Activated T-helper 1 cell treated with anti-CD3 and anti-CD28 coated beads, Interleukin-12 subunit alpha, Interleukin-12 subunit beta, Interleukin-2, Interleukin-4 antibody, amounts not matched to agents 30 ng/mL and 10 ng/mL and 1 ng/mL, durations not matched to agents 14 hours and 24 hours and 36 hours (primary cell): ENCODE measurements at regions of chr7 and their contacts with region 1.

Region 1: DNA sequence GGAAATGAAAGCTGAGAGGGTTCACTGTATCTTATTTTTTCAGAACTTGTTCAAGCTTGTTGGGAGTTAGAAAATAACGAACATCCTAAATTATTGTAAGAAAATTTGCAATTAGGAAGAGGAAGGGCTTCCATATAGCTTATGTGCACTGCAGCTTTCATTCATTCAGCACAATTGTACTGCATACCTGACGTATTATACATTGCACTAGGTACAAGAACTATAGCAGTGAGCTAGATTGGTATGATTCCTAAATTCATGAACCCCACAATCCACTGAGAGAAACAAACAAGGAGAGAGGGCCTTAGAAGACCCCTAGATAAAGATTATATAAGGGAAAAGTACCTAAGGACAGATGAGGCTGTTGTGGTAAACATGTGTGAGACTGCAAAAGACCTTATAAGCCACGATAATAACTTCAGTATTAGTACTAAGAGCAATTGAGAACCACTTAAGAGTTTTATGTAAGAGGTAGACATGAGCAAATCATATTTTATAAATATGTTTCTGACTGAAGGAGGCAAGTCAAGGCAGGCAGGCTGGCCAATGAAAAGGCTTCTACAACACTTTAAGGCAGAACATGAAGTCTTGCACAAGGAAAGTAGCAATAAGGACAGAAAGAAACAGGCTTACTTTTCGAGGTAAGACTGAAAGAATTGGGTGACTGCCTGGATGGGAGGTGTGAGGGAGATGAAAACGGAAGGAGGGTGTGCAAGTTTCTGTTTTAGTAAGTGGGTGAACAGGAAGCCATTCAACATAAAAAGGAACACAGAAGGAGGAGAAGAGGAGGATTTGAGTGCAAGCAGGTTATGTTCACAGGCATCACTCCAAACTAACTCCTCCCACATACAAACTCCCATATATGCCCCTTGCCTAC is 77.9 kb upstream of the LRRN3 start:
- DNase-seq: peak; percentile 53
- H3K4me3 Mint-ChIP-seq: peak overlapping the region; percentile 80
- H3K27ac Mint-ChIP-seq: peak overlapping the region; percentile 86
- H3K4me1 Mint-ChIP-seq: peaks cover 72% of the 10 kb centered on the region
- H3K27me3 Mint-ChIP-seq: no peaks in the 10 kb centered on the region

Region 2: GRCh38 chr7:110977127-110977737 is 35.8 kb before region 1 on chr7:
- intact Hi-C with region 1: loop called (anchors 1 kb)
- DNase-seq: no peak
- H3K4me3 Mint-ChIP-seq: peak overlapping the region; percentile 75
- H3K27ac Mint-ChIP-seq: peak overlapping the region; percentile 79
- H3K4me1 Mint-ChIP-seq: peaks cover 41% of the 10 kb centered on the region
- H3K27me3 Mint-ChIP-seq: no peaks in the 10 kb centered on the region

Region 3: GRCh38 chr7:111076205-111076604 is 63.2 kb after region 1 on chr7:
- intact Hi-C with region 1: loop called (anchors 1 kb)
- DNase-seq: no peak
- H3K4me3 Mint-ChIP-seq: peak overlapping the region; percentile 46
- H3K27ac Mint-ChIP-seq: peak overlapping the region; percentile 85
- H3K4me1 Mint-ChIP-seq: peaks cover 78% of the 10 kb centered on the region
- H3K27me3 Mint-ChIP-seq: no peaks in the 10 kb centered on the region

Region 4: DNA sequence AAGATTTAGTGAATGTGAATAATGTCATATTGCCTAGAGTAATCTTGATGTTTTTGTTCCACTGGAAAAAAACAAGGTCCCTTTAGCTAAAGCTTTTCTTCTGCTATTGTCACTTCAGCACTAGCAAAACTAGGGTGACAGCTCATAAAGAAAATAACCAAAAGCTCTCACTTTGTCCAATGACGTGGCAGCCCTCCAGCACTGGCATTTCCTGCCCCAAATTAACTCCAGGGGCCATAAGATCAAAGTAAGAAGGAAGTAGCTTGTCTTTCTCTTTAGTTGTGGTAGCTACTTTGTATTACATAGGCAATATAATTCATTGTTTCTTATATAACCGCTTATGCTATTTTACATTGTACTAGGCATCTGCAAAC is 125.1 kb after region 1 on chr7:
- intact Hi-C with region 1: loop called (anchors 1 kb)
- DNase-seq: peak; percentile 61
- H3K4me3 Mint-ChIP-seq: peak overlapping the region; percentile 53
- H3K27ac Mint-ChIP-seq: peak overlapping the region; percentile 96
- H3K4me1 Mint-ChIP-seq: peaks cover 35% of the 10 kb centered on the region
- H3K27me3 Mint-ChIP-seq: peaks cover 4% of the 10 kb centered on the region

Region 5: DNA sequence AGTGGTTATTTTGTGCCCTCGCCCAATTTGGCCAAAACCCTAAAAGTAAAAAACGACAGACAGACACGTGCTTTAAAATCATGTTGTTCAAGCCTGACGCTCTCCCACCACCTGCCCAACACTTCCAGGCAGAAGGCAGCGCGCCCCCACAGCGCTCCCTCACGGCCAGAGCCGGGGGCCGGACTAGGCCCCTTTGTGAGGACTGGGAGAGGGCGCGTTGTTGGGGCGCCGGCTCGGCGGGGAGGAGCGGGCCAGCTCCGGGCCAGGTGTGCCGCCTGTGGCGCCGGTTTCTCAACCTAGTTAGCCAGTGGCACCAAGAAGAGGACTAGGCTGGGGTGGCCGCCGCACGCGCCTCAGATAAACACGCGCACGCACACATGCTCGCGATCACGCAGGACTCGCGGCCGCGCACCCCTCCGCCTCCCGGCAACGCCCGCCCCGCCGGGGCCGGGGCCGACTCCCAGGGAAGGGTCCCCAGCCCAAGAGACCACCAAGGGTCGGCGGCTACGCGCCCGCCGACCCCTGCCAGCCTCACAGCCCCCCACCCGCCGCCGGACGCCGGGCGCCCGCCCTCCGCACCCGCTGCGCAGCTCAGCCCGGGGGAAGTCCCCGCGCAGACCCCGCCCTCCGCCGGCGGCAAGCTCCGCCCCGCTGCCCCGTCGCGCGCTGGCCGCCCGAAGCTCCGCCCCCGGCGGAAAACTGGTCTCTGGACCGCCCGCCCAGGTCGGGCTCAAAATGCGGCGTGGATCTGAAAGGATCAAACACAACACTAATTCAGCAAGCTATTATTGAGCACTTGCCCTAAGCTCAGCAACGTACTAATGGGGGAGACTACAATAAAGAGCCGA is 549.1 kb after region 1 on chr7 and contains the start of gene IMMP2L:
- intact Hi-C with region 1: loop called (anchors 5 kb)
- DNase-seq: peak; percentile 89
- H3K4me3 Mint-ChIP-seq: peak within 1 kb of the TSS; percentile 87
- H3K27ac Mint-ChIP-seq: peak within 1 kb of the TSS; percentile 89
- H3K4me1 Mint-ChIP-seq: peaks cover 37% of the 10 kb centered on the region
- H3K27me3 Mint-ChIP-seq: no peaks in the 10 kb centered on the region
- total RNA-seq, gene IMMP2L: 11.3 and 16.0 TPM in 2 replicates